Right ventricle myocardium superior (tissue), 1 donor: ENCODE measurements at regions of chr9 and their contacts with region 1.

Region 1: DNA sequence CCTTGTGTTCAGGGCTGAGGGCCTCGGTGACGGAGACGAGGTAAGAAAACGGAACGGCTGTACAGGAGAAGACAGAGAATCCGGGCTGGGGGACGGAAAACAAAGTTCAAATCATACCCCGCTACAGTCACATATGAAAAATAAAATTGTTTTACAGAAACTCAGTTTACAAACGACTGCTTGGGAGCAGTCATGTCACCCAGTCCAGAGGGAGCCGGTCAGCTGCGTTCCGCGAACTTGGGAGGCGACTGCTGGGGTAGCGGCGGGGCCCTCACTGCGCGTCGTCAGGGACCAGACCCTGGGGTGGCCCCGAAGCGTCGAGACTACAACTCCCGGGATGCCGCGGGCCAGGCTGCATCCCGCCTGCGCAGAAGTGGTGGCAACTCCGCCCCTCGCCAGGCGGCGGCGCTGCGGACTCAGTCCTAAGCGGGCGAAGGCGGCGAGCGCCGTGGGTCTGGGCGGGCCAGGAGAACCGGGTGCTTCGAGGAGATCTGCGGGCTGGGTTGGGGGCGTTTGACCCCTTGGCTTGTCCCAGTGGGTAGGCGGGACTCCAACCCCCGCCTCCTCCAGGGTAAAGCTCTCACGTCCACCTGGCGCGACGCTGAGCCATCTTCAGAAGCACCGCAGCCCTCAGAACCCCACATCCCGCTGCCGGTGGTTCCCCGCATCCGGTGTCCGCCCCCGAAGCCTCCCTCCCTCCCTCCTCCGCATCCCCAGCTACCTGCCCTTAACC is 4.0 kb downstream of the SIT1 start:
- DNase-seq: peak; percentile 97
- ATAC-seq: peak; percentile 98

Region 2: GRCh38 chr9:35436933-35437332 is 209.8 kb before region 1 on chr9:
- intact Hi-C with region 1: no loop called
- DNase-seq: no peak
- ATAC-seq: no peak

Region 3: DNA sequence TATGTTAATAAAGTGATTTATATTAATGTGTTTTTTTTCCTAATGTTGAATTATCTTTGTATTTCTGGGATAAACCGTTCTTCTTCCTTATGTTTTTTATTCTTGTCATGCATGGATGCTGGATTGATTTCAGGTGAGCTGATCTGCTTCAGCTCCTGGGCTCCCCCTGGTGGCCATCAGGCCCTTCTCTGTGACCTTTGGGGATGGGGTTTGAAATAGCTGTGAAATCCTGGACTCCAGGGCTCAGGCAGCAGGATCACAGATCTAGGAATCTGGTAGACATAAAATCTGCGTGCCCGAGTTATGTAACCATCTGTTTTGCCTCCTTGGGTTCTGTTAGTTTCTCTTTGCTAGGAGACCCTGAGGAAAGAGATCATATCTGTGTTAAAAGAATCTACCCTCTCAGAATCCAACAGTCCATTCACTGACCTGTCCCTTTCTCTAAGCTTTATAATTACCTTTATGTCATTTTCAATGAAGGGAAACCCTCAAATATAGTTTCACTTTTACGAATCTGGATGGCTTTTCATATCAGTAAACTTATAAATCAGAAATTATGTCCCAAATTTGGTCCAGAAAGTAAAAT is 235.7 kb after region 1 on chr9:
- intact Hi-C with region 1: loop called (anchors 10 kb)
- DNase-seq: peak; percentile 91
- ATAC-seq: peak; percentile 95